Psoas muscle (tissue), 8 donors: ENCODE measurements at regions of chr9 and their contacts with region 1.

Region 1: DNA sequence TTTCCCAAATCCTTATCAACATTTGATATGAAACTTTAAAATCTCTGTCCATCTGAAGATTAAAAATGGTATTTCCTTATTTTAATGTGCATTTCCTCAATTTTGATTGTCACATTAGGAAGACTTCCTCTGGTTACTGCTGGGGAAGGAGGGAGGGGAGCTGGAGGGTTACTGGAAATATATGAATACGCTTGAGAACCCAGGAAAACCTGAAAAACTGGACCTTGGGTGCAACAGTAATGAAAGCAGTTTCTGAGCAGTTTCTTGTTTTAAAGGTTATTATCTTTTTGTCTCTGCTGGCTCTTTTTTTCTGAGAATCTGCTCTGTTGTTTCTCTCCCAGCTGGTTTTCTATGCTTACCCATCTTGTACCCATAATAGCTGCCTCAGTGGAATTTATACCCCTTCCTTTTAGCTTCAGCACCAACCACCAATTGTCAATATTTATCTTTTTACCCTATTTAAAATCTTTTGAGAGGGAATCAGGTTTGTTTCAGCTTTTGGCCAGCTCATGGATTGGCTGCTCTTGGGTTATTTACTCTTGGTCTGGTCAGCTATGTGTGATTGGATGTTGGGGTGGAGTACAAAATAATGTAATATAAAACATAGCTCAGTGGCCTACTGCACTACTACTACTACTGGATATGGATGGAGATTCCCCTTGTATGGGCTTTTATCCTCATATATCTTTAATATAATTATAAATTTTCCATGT is 67.4 kb downstream of the UNC13B start:
- DNase-seq: no peak
- ATAC-seq: no peak
- H3K4me3 ChIP-seq: no peak overlapping the region
- H3K27ac ChIP-seq: peak overlapping the region; percentile 84
- H3K4me1 ChIP-seq: peaks cover 57% of the 10 kb centered on the region
- H3K27me3 ChIP-seq: no peaks in the 10 kb centered on the region
- CTCF ChIP-seq: no peak

Region 2: DNA sequence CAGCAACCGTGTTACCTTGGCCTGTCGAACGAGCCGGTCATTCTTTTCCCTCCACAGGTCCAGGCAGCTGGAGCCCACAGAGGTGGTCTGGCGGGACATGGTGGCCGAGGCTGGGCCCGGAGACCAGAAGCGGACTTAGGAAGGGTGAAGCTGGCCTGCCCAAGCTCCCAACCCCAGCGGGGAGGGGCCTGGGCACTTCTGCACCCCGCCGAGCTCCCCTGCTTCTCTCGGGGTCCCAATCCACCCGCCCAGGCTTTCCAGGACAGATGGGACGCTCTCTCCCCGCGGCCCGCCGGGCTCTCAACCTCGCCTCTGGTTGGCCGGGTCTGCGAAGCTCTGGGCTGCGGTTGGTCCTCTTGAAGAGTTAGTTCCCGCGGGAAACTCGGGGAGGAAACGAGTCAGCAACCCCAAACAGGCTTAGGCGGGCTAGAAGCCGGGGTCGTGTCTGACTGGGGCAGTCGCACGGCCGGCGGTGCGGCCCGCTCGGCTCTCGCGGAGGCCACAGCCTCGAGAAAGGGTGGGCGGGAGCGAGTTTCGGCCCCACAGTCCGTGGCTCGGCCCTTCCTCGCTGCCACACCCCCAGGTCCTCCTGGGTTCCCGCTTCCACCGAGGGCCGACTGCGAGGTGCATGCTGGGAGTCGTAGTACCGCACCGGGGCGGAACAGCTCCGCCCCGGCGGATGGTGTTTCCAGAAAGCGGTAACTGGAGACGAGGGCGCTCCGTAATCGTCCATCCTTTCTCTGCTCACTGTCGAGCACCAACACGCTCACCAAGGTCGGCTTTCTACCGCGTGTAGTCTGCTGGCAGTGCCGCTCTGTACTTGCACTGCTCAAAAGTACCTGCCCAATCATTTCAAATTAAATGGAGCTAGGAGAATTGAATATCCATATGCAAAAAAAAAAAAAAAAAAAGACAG is 149.5 kb before region 1 on chr9 and contains the start of gene FANCG:
- intact Hi-C with region 1: no loop called
- DNase-seq: peak; percentile 90 to 95
- ATAC-seq: peak; percentile 96 to 98 (median 98)
- H3K4me3 ChIP-seq: peak within 1 kb of the TSS; percentile 74
- H3K27ac ChIP-seq: peak within 1 kb of the TSS; percentile 68
- H3K4me1 ChIP-seq: peaks cover 16% of the 10 kb centered on the region
- H3K27me3 ChIP-seq: no peaks in the 10 kb centered on the region
- CTCF ChIP-seq: no peak
- total RNA-seq, gene FANCG: 2.9 to 6.0 (median 3.7) TPM

Region 3: DNA sequence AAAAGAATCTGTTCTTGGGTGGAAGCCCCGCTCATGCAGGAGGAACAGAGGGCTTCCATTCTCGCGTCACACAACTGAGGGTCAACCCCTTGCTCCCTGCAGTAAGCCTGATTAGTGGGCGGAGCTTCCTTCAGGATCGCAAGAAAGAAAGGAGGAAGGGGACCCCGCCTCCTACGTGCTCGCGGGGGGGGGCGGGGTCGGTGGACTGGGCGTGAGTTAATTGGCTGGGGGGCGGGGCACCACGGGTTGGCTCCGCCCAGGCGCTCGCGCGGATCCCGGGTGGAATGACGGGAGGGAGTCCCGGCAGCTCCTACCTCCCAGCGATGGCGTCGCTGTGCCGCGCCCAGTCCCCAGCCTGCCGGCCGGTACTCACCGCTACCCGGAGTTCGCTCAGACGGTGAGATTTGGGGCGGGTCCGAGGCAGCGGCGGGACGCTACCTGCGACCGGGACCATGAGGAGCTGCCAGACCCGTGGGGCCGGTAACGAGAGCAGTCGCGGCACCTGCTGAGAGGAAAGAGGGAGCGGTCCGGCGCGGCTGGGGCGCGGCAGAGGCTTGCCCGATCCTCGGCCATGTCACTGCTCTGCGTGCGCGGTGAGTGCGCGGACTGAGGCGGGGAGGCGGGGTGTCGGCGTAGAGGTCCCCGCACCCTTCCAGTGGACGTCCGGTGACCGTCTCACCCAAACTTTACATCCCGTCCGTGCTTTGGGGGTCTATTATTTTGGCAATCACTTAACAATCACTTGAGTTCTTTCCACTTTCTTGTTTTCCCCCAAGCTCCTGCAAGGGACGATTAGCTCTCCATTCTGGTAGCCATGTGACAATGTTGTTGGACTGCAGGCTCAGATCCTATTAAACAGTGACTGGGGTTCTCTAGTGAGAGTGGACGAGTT is 67.3 kb before region 1 on chr9 and contains the start of gene UNC13B:
- intact Hi-C with region 1: loop called (anchors 2 to 5 kb)
- DNase-seq: peak; percentile 95 to 97
- ATAC-seq: peak; percentile 98 to 99 (median 98)
- H3K4me3 ChIP-seq: peak within 1 kb of the TSS; percentile 80
- H3K27ac ChIP-seq: peak within 1 kb of the TSS; percentile 95
- H3K4me1 ChIP-seq: peaks cover 24% of the 10 kb centered on the region
- H3K27me3 ChIP-seq: no peaks in the 10 kb centered on the region
- CTCF ChIP-seq: peak; percentile 19
- total RNA-seq, gene UNC13B: 10.5 to 12.9 (median 11.5) TPM

Region 4: GRCh38 chr9:35277628-35278359 is 48.6 kb after region 1 on chr9:
- intact Hi-C with region 1: no loop called
- DNase-seq: no peak
- ATAC-seq: peak; percentile 53 to 89 (median 84)
- H3K4me3 ChIP-seq: no peak overlapping the region
- H3K27ac ChIP-seq: peak overlapping the region; percentile 53
- H3K4me1 ChIP-seq: peaks cover 20% of the 10 kb centered on the region
- H3K27me3 ChIP-seq: no peaks in the 10 kb centered on the region
- CTCF ChIP-seq: no peak